CD4-positive, alpha-beta T cell (primary cell): ENCODE measurements at regions of chr6 and their contacts with region 1.

Region 1: GRCh38 chr6:33271458-33272274 is at the starts of genes RPS18 and VPS52:
- DNase-seq: peak; percentile 83 to 98 (median 89)
- ATAC-seq: peak; percentile 80
- H3K4me3 ChIP-seq: peak within 1 kb of the TSS; percentile 93
- H3K4me3 Mint-ChIP-seq: peak within 1 kb of the TSS; percentile 96
- H3K27ac ChIP-seq: peak within 1 kb of the TSS; percentile 92
- H3K27ac Mint-ChIP-seq: peak within 1 kb of the TSS; percentile 97
- H3K4me1 ChIP-seq: peaks cover 62% of the 10 kb centered on the region
- H3K4me1 Mint-ChIP-seq: peaks cover 70% of the 10 kb centered on the region
- H3K27me3 ChIP-seq: no peaks in the 10 kb centered on the region
- H3K27me3 Mint-ChIP-seq: no peaks in the 10 kb centered on the region
- CTCF ChIP-seq: no peak
- total RNA-seq, gene RPS18: 5,159 to 5,309 TPM
- total RNA-seq, gene VPS52: 67.9 TPM

Region 2: DNA sequence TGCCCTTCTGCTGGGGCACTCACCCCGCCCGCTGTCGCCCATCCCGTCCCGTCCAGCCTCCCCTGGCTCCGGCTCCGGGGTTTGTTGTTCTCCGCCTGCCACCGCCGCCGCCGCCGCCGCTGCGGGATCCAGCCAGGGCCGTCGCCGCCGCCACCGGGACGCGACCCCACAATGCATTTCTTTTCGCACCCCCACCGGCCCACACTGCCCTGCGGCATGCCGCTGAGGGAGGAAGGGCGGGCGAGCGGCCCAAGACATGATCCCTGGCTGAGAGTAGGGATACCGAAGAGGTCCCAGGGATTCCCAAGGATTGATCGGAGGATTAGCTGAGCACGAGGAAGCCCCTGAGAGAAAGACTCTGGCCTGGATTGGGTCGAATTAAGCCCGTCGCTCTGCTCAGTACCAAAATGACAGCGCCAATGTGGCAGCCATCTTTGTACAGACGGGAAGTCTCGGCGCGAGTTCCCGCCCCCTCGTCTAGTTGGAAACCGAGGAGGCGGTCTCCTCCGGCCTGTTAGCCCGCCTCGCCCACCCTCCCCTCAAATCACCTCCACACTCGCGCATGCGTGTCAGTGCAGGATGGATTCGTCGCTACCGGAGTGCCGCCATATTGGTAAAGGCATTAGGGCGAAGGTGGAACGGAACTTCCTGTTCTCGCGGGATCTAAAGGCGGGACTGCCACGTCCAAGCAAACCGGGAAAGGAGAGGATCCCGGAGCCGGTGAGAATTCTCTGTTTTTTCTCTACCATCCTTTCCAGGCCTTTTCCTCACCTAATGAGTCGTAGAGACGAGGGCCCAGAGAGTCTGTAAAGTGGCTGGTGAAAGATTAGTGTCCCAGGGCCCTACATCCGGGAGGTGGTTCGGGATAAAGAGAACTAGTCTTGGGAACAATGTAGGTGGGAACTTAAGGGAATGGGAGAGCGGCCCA is 71.2 kb before region 1 on chr6 and contains the starts of genes RXRB and SLC39A7:
- CTCF ChIA-PET with region 1: interaction called, 5 read pairs
- POLR2A ChIA-PET with region 1: interaction called, 5 read pairs
- intact Hi-C with region 1: loop called (anchors 2 kb)
- DNase-seq: peak; percentile 97 to 100 (median 99)
- ATAC-seq: peak; percentile 78
- H3K4me3 ChIP-seq: peak within 1 kb of the TSS; percentile 78
- H3K4me3 Mint-ChIP-seq: peak within 1 kb of the TSS; percentile 98
- H3K27ac ChIP-seq: peak within 1 kb of the TSS; percentile 97
- H3K27ac Mint-ChIP-seq: peak within 1 kb of the TSS; percentile 100
- H3K4me1 ChIP-seq: peaks cover 65% of the 10 kb centered on the region
- H3K4me1 Mint-ChIP-seq: peaks cover 79% of the 10 kb centered on the region
- H3K27me3 ChIP-seq: no peaks in the 10 kb centered on the region
- H3K27me3 Mint-ChIP-seq: no peaks in the 10 kb centered on the region
- CTCF ChIP-seq: no peak
- total RNA-seq, gene RXRB: 42.9 to 45.0 TPM
- total RNA-seq, gene SLC39A7: 8.6 to 9.6 TPM

Region 3: GRCh38 chr6:33299237-33299944 is 27.7 kb after region 1 on chr6:
- CTCF ChIA-PET with region 1: interaction called, 22 read pairs
- POLR2A ChIA-PET with region 1: interaction called, 80 read pairs
- intact Hi-C with region 1: loop called in 1 of 2 experiments (anchors 1 kb)
- DNase-seq: peak; percentile 89 to 97 (median 92)
- ATAC-seq: peak; percentile 84
- H3K4me3 ChIP-seq: peak overlapping the region; percentile 91
- H3K4me3 Mint-ChIP-seq: peak overlapping the region; percentile 98
- H3K27ac ChIP-seq: peak overlapping the region; percentile 90 to 96
- H3K27ac Mint-ChIP-seq: peak overlapping the region; percentile 99
- H3K4me1 ChIP-seq: peaks cover 34% of the 10 kb centered on the region
- H3K4me1 Mint-ChIP-seq: peaks cover 32% of the 10 kb centered on the region
- H3K27me3 ChIP-seq: no peaks in the 10 kb centered on the region
- H3K27me3 Mint-ChIP-seq: no peaks in the 10 kb centered on the region
- CTCF ChIP-seq: peak; percentile 74

Region 4: GRCh38 chr6:33391278-33391921 is 119.7 kb after region 1 on chr6 and contains the start of gene KIFC1:
- CTCF ChIA-PET with region 1: interaction called, 5 read pairs
- POLR2A ChIA-PET with region 1: no interaction called
- intact Hi-C with region 1: loop called in 1 of 2 experiments (anchors 1 kb)
- DNase-seq: peak; percentile 98 to 100 (median 99)
- ATAC-seq: peak; percentile 86
- H3K4me3 ChIP-seq: peak within 1 kb of the TSS; percentile 65
- H3K4me3 Mint-ChIP-seq: peak within 1 kb of the TSS; percentile 87
- H3K27ac ChIP-seq: peak within 1 kb of the TSS; percentile 69 to 78
- H3K27ac Mint-ChIP-seq: peak within 1 kb of the TSS; percentile 91
- H3K4me1 ChIP-seq: peaks cover 25% of the 10 kb centered on the region
- H3K4me1 Mint-ChIP-seq: peaks cover 23% of the 10 kb centered on the region
- H3K27me3 ChIP-seq: no peaks in the 10 kb centered on the region
- H3K27me3 Mint-ChIP-seq: no peaks in the 10 kb centered on the region
- CTCF ChIP-seq: peak; percentile 99
- total RNA-seq, gene KIFC1: 1.2 to 1.6 TPM

Region 5: DNA sequence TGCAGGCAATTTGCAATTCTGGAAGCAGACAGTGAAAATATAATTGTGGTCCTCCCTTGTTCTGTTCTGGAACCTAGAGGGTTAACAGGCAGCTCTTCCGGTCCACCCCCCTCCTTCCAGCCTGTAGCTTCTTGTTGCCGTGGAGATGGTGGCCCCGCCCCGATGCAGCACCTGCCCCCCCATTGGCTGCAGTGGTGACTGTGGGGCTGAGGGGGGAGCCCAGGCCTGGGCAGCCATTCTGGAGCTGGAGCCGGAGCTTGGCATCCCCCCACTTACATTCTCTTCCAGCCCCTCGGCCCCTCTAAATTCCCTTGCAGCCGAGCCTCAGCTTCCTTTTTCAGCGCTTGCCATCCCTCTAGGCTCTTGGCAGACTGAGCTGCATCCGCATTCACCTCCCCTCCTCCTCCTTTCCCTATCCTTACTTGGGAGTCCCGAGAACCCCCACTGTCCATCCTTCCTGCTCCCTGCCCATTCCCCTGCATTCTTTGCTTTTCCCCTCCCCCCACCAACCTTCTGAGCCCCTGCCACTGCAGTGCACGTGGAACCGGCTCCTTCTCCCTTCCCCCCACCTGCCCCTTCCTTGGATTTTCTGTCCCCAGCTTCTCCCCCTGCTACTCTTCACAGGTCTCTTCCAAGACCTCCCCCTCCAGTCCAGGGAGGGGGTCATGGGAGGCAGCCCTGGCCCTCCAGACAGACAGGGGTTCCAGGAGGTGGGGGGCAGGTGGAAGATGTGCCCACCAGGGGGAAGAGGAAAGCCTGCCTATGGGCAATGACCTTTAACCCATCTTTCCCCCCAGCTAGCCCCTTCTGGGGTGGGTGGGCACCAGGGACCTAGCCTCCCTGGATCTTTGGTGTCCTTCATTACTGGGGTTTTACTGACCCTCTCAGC is 159.6 kb after region 1 on chr6:
- CTCF ChIA-PET with region 1: interaction called, 8 read pairs
- POLR2A ChIA-PET with region 1: interaction called, 16 read pairs
- intact Hi-C with region 1: loop called in 1 of 2 experiments (anchors 5 kb)
- DNase-seq: peak; percentile 74 to 92 (median 85)
- ATAC-seq: peak; percentile 66
- H3K4me3 ChIP-seq: peak overlapping the region; percentile 71
- H3K4me3 Mint-ChIP-seq: peak overlapping the region; percentile 93
- H3K27ac ChIP-seq: peak overlapping the region; percentile 52 to 64
- H3K27ac Mint-ChIP-seq: peak overlapping the region; percentile 92
- H3K4me1 ChIP-seq: peaks cover 63% of the 10 kb centered on the region
- H3K4me1 Mint-ChIP-seq: peaks cover 65% of the 10 kb centered on the region
- H3K27me3 ChIP-seq: no peaks in the 10 kb centered on the region
- H3K27me3 Mint-ChIP-seq: no peaks in the 10 kb centered on the region
- CTCF ChIP-seq: no peak